ENCODE measurements at regions of chr10 and their contacts with region 1.

Region 1: DNA sequence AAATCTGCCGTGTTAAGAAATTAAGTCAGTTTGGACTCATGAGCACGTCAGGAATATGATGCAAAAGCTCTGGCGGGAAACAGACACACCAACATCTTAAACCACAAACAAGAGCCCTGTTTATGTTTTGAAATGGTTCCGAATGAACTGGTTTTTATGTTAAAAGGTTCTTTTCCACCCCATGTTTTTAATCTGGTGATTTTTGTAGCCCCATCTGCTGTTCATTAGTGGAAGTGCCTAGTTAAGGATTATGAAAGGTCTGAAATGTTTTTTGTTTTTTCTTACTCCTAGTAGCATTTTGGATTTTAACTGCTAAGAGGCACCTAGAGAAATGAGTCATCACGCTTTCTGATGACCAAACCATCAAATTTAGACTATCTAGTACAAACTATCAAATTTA is 404.1 kb upstream of the MKI67 start:
- DNase-seq: no peak
- H3K4me3 ChIP-seq: no peak overlapping the region
- H3K27ac ChIP-seq: no peak overlapping the region
- H3K4me1 ChIP-seq: no peaks in the 10 kb centered on the region
- H3K27me3 ChIP-seq: peaks cover 58% of the 10 kb centered on the region
- CTCF ChIP-seq: peak; percentile 74

Region 2: GRCh38 chr10:128263891-128264688 is 266.2 kb before region 1 on chr10:
- intact Hi-C with region 1: loop called (anchors 10 kb)
- DNase-seq: peak; percentile 56
- H3K4me3 ChIP-seq: no peak overlapping the region
- H3K27ac ChIP-seq: no peak overlapping the region
- H3K4me1 ChIP-seq: no peaks in the 10 kb centered on the region
- H3K27me3 ChIP-seq: peaks cover 89% of the 10 kb centered on the region
- CTCF ChIP-seq: peak; percentile 76

Region 3: GRCh38 chr10:128440513-128441160 is 89.7 kb before region 1 on chr10:
- intact Hi-C with region 1: no loop called
- DNase-seq: no peak
- H3K4me3 ChIP-seq: no peak overlapping the region
- H3K27ac ChIP-seq: no peak overlapping the region
- H3K4me1 ChIP-seq: no peaks in the 10 kb centered on the region
- H3K27me3 ChIP-seq: peaks cover 63% of the 10 kb centered on the region
- CTCF ChIP-seq: no peak

Region 4: GRCh38 chr10:128451879-128452278 is 78.4 kb before region 1 on chr10:
- intact Hi-C with region 1: no loop called
- DNase-seq: no peak
- H3K4me3 ChIP-seq: no peak overlapping the region
- H3K27ac ChIP-seq: no peak overlapping the region
- H3K4me1 ChIP-seq: no peaks in the 10 kb centered on the region
- H3K27me3 ChIP-seq: peaks cover 37% of the 10 kb centered on the region
- CTCF ChIP-seq: no peak

Measured in left ventricle myocardium inferior (tissue), 1 donor.